ENCODE measurements at regions of chr6 and their contacts with region 1.

Region 1: DNA sequence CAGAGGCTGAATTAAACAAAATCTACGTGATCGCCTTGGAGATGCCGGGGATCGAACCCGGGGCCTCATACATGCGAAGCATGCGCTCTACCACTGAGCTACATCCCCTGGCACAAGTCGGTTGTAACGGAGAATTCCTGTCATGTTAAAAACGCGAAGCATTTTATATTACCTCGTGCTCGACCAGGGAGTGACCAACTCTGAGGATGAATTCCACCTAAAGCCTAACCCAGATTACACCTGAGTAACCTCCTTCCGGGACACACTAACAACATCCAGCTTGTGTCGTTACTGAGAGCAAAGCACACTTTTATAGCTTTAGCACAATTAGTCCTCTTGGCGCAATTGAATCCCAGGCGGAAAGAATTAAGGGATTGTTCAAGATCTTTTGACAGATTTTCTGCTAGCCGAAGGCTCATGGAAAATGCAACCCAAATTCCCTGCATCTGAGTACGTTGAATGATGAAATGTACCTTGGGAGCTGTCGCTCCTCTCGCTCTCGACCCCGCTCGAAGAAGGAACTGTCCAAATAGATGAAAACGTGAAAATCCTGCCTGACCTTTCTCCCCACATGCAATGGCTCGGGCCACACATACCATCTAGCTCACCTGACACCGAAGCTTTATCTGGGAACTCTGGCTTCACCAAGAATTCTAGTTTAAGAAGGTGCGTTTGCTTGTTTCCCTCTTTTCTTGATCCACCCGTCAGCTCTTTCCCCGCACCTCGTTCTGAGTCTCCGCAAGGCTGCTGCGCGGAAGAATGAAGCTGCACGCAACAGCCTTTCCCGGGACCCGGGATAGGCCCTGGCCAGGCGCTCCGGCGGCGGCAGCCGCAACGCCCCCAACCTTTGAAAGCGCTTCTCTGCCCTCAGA is 148.4 kb downstream of the GPX5 start:
- DNase-seq: peak; percentile 92
- ATAC-seq: peak; percentile 92
- H3K4me3 ChIP-seq: peak overlapping the region; percentile 73
- H3K27ac ChIP-seq: no peak overlapping the region
- H3K4me1 ChIP-seq: no peaks in the 10 kb centered on the region
- H3K27me3 ChIP-seq: no peaks in the 10 kb centered on the region
- CTCF ChIP-seq: no peak

Region 2: DNA sequence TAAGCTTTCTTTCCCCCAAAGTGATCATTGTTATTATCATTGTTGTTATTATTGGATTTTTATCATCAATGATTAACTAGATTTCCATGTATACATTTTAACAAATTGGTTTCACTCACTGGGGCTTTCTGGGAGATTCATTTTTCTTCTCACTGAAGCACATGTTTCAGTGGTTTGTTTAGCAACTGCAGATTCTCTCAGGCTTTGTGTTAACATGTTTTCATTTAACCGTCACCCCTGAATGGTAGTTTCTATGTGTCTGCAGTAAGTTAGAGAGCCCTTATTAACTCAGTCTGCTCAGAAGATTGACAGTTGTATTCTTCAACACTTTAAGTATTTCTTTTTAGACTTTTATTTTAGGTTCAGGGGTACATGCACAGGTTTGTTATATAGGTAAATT is 434.4 kb before region 1 on chr6:
- CTCF ChIA-PET with region 1: no interaction called
- POLR2A ChIA-PET with region 1: no interaction called
- intact Hi-C with region 1: no loop called
- DNase-seq: no peak
- ATAC-seq: no peak
- H3K4me3 ChIP-seq: no peak overlapping the region
- H3K27ac ChIP-seq: no peak overlapping the region
- H3K4me1 ChIP-seq: no peaks in the 10 kb centered on the region
- H3K27me3 ChIP-seq: no peaks in the 10 kb centered on the region
- CTCF ChIP-seq: no peak

Region 3: GRCh38 chr6:28446818-28447511 is 227.1 kb before region 1 on chr6:
- CTCF ChIA-PET with region 1: no interaction called
- POLR2A ChIA-PET with region 1: no interaction called
- intact Hi-C with region 1: no loop called
- DNase-seq: no peak
- ATAC-seq: no peak
- H3K4me3 ChIP-seq: no peak overlapping the region
- H3K27ac ChIP-seq: no peak overlapping the region
- H3K4me1 ChIP-seq: peaks cover 9% of the 10 kb centered on the region; the same call in 1 of the 2 replicates
- H3K27me3 ChIP-seq: no peaks in the 10 kb centered on the region
- CTCF ChIP-seq: no peak

Region 4: GRCh38 chr6:28589234-28589956 is 84.6 kb before region 1 on chr6:
- CTCF ChIA-PET with region 1: no interaction called
- POLR2A ChIA-PET with region 1: no interaction called
- intact Hi-C with region 1: no loop called
- DNase-seq: peak; percentile 23
- ATAC-seq: no peak
- H3K4me3 ChIP-seq: no peak overlapping the region
- H3K27ac ChIP-seq: no peak overlapping the region
- H3K4me1 ChIP-seq: peaks cover 24% of the 10 kb centered on the region
- H3K27me3 ChIP-seq: no peaks in the 10 kb centered on the region
- CTCF ChIP-seq: no peak

Region 5: DNA sequence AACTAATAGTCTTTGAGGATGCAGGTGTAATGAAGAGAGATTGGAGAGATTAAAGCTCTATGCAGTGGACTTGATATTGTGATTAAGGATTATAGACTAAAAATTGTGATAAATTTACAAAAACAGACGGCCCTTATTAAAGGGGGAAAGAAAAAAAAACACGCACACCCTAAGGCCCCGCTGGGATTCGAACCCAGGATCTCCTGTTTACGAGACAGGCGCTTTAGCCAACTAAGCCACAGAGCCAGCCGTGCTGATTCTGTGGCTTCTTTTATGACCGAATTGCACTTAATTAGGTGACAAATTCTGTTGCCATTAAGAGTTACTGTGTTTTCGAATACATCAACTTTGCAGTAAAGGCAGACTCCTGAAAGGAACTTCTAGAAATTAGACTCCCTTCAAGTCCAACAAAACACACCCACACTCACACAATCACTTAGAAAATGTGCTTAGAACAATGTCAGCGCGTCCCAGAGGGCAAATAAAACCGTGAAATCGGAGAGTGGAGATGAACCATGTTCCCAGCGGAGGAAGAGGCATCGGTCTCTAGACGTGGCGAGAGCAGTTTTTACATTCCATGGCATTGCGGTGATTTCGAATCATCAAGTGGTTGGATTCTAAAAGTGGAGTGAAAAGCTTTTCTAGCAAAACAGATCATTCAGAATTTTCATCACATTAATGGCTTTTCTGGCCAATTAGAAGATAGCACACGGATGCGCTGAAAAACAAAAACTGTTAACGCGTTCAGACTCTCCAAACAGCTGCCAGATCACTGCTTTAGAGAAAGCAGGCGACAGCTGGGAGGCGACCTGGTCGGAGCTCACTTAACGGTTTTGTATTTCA is 25.8 kb before region 1 on chr6:
- CTCF ChIA-PET with region 1: no interaction called
- POLR2A ChIA-PET with region 1: no interaction called
- intact Hi-C with region 1: loop called (anchors 1 kb)
- DNase-seq: peak; percentile 94
- ATAC-seq: peak; percentile 85
- H3K4me3 ChIP-seq: peak overlapping the region; percentile 74
- H3K27ac ChIP-seq: no peak overlapping the region
- H3K4me1 ChIP-seq: peaks cover 9% of the 10 kb centered on the region; the same call in 1 of the 2 replicates
- H3K27me3 ChIP-seq: no peaks in the 10 kb centered on the region
- CTCF ChIP-seq: no peak

Region 6: DNA sequence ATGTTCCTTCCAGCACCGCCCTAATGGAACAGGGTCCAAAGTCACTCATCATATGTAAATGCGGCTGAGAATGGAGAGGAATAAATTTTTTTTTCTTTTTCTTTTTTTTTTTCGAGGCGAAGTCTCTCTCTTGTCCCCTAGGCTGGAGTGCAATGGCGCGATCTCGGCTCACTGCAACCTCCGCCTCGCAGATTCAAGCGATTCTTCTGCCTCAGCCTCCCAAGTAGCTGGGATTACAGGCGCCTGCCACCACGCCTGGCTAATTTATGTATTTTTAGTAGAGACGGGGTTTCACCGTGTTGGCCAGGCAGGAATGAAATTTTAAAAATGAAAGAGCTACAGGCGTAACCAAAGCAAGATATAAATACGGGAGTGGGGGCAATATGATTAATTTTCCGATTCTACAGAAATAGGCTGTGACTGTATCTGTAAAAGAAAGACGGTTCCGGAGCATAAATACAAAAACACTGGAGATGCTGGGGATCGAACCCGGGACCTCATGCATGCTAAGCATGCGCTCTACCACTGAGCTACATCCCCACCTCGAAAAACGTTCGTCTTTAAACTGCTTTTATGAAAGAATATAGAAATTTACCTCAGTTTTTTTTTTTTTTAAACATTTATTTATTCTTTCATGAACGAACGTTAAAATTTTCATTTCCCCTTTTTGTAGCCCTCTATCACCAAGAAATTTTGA is 16.1 kb before region 1 on chr6:
- CTCF ChIA-PET with region 1: no interaction called
- POLR2A ChIA-PET with region 1: no interaction called
- intact Hi-C with region 1: loop called (anchors 1 kb)
- DNase-seq: peak; percentile 75
- ATAC-seq: peak; percentile 85
- H3K4me3 ChIP-seq: peak overlapping the region; percentile 69
- H3K27ac ChIP-seq: no peak overlapping the region
- H3K4me1 ChIP-seq: peaks cover 7% of the 10 kb centered on the region
- H3K27me3 ChIP-seq: no peaks in the 10 kb centered on the region
- CTCF ChIP-seq: no peak

Measured in PC-3 (cell line).